SK-N-SH (cell line): ENCODE measurements at regions of chr2 and their contacts with region 1.

Region 1: GRCh38 chr2:128754246-128754724 is 435.6 kb upstream of the HS6ST1 start:
- DNase-seq: peak; percentile 48
- H3K4me3 ChIP-seq: no peak overlapping the region
- H3K27ac ChIP-seq: no peak overlapping the region
- H3K4me1 ChIP-seq: peaks cover 0 to 11% of the 10 kb centered on the region in 2 experiments; a peak in 1 of 4 replicates
- H3K27me3 ChIP-seq: no peaks in the 10 kb centered on the region
- CTCF ChIP-seq: no peak
- EP300 ChIP-seq: no peak
- RAD21 ChIP-seq: no peak

Region 2: DNA sequence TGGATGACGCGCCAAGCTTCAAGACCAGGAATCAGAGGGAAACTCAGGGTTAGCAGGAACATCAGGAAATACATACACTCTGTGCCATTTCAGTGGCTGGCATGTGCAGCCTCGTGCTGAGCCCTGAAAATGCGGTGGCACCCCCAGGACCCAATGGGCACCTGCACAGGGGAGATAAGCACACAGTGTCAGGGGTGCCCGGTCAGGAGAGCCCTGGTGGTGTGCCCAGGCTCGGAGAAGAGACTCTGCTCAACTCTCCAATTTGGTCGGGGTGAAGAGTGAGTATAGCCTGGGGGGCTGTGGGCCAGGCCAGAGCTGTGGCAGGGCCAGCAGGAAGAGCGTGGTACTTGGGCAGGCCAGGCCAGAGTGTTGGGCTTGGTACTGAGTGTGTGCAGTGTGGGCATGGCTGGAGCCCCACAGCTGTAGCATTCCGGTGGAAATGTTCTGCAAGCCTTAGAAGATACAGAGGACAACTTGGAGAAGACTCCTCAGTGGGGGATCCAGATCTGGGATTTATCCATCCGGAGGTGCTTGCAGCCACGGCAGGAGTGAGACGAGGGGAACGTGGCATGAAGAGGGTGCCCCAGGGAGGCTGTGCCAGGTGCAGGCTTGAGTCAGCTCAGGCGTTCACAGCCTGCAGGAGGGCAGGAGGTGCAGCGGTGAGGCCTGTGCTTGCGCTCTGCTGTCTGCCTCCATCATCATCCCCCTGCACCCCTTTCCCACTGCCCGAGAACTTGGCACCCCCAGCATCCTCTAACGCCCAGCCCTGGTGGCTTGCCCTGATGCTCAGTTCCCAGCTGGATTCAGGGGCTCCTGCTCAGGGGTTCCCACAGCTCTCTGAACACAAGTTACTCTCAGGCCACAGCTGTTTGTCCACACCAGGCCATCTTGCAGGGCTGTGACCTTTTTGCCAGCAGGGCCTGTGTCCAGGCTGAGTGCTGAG is 16.1 kb after region 1 on chr2:
- CTCF ChIA-PET with region 1: interaction called, 20 read pairs
- POLR2A ChIA-PET with region 1: no interaction called
- DNase-seq: no peak
- H3K4me3 ChIP-seq: no peak overlapping the region
- H3K27ac ChIP-seq: no peak overlapping the region
- H3K4me1 ChIP-seq: peaks cover 0 to 4% of the 10 kb centered on the region in 2 experiments; a peak in 1 of 4 replicates
- H3K27me3 ChIP-seq: no peaks in the 10 kb centered on the region
- CTCF ChIP-seq: no peak
- EP300 ChIP-seq: no peak
- RAD21 ChIP-seq: no peak

Region 3: GRCh38 chr2:128930101-128930500 is 175.8 kb after region 1 on chr2:
- CTCF ChIA-PET with region 1: no interaction called
- POLR2A ChIA-PET with region 1: no interaction called
- DNase-seq: no peak
- H3K4me3 ChIP-seq: no peak overlapping the region
- H3K27ac ChIP-seq: no peak overlapping the region
- H3K4me1 ChIP-seq: no peaks in the 10 kb centered on the region
- H3K27me3 ChIP-seq: no peaks in the 10 kb centered on the region
- CTCF ChIP-seq: no peak
- EP300 ChIP-seq: no peak
- RAD21 ChIP-seq: no peak

Region 4: DNA sequence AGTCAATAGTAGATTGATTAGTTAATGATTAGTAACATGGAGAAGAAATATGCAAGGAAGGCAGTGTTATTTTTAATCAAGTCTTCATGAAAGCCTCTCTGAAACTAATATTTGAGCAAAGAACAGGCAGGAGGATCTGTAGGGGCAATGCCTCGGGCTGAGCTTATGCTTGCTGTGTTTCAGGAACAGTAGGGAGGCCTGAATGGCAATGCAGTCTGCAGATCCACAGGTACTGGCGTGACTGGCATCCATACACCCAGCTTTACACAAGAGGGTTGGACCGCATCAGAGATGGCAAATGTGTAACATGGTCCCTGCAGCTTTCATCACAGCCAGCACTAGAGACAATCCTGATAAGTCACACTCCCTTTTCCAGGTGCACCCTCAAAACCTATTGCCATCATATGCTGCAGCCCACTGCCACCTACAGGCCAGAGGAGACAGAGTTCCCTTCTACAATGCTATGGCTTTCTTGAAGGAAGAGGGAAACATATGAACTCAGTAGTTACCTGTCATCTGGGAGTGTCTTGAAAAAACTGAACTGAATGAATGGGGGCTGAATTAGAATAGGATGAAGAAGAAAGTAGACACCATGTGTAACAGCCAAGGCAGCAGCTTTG is 642.8 kb after region 1 on chr2:
- CTCF ChIA-PET with region 1: interaction called, 11 read pairs
- POLR2A ChIA-PET with region 1: no interaction called
- DNase-seq: peak; percentile 43
- H3K4me3 ChIP-seq: no peak overlapping the region; a peak in 1 of 4 replicates
- H3K27ac ChIP-seq: no peak overlapping the region
- H3K4me1 ChIP-seq: peaks cover 0 to 4% of the 10 kb centered on the region in 2 experiments; a peak in 1 of 4 replicates
- H3K27me3 ChIP-seq: no peaks in the 10 kb centered on the region
- CTCF ChIP-seq: peak; percentile 28
- EP300 ChIP-seq: no peak
- RAD21 ChIP-seq: peak; percentile 83